MCF 10A (cell line): ENCODE measurements at regions of chr4 and their contacts with region 1.

Region 1: DNA sequence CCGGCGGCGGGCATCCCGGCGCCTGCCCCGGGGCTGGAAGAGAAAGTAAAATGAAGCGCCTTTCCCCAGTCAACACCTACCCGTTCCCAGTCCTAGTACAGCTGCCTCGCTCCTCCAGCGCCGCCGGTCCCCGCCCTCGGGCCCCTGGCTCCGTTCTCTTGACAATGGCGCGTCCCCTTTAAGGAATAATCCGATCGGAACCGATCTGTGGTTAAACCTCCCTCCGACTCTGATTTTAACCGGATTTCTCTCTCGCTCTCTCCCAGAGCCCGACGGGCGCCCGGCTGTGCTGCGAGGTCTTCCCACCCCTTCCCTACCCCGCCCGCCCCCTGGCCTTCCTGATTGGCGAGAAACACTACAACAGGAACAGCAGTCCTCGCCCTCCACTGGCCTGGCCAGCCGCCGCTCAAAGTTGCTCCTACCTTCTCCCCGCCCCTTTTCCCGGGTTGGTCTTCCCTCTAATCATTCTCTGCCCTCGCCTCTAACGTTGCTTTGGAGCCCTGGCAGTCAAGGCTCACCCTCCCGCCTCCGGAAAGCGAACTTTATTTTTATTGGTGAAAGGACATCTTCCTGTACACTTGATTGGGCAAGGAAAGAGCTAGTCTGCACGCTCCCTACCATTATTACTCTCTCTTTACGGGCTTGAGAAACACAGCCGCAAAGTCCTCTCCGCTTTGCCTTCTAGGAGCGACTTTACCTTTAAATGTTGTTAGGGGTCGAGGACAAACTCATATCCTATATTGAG is at the start of gene FRYL:
- DNase-seq: peak; percentile 100
- H3K4me3 Mint-ChIP-seq: peak within 1 kb of the TSS; percentile 94
- H3K27ac Mint-ChIP-seq: peak within 1 kb of the TSS; percentile 96
- H3K4me1 Mint-ChIP-seq: peaks cover 25% of the 10 kb centered on the region
- H3K27me3 Mint-ChIP-seq: no peaks in the 10 kb centered on the region
- CTCF ChIP-seq: no peak
- total RNA-seq, gene FRYL: 52.3 and 53.9 TPM in 2 replicates

Region 2: DNA sequence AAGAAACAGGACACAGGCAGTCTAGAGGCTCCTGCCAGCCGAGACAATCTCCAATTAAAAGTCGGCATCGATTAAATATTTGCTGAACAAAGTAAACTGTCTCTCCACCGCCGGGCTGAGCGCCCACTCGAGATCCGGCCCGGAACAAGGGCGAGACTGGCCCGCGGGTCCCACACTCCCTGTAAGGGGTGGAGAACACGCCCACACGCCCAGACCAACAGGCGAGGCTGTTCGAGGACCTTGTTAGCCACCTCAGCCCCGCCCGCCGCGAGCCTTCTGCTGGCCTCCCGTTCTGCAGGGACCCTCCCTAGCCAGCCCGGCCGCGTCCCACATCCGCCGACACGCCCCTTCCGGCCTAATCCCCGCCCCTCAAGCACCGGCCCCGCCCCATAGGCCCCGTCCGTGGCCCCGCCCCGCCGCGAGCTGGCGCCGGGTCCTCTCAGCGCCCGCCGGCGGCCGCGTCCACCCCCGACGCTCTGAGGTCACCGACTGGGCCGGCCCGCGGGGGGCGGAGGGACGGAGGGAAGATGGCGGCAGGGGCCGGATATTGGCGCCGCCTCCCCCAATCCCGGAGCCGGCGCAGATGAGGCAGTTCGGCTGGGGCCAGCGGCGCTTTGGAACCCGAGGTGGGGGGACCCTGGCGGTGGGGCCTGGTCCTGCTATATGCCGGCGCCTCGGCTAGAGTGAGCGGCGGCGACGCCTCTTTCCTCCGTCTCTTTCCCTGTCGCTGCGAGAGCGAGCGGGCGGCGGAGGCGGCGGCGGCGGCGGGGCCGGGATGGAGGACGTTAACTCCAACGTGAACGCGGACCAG is 439.0 kb before region 1 on chr4 and contains the start of gene SLAIN2:
- CTCF ChIA-PET with region 1: no interaction called
- POLR2A ChIA-PET with region 1: interaction called, 13 read pairs
- intact Hi-C with region 1: no loop called
- DNase-seq: peak; percentile 96
- H3K4me3 Mint-ChIP-seq: peak within 1 kb of the TSS; percentile 98
- H3K27ac Mint-ChIP-seq: peak within 1 kb of the TSS; percentile 97
- H3K4me1 Mint-ChIP-seq: peaks cover 53% of the 10 kb centered on the region
- H3K27me3 Mint-ChIP-seq: no peaks in the 10 kb centered on the region
- CTCF ChIP-seq: no peak
- total RNA-seq, gene SLAIN2: 74.0 and 81.6 TPM in 2 replicates

Region 3: DNA sequence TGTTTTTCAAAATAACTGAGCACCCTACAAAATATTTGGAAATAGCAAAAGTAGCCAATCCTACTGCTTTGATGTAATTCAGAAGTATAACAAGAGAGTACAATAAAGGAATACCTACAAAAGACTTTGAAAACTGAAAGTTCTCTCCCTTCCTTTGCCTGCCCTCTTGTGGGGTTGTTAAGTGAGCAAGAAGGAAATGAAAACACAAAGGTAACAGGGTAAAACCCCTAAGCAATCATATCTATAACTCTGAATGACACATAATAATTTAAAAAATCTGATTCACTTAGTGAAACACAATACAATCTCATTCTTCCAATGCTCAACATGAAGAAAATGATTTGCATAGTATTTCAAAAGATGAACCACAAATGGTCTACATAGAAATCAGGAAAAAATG is 98.3 kb before region 1 on chr4:
- CTCF ChIA-PET with region 1: no interaction called
- POLR2A ChIA-PET with region 1: interaction called, 24 read pairs
- intact Hi-C with region 1: loop called (anchors 5 kb)
- DNase-seq: peak; percentile 45
- H3K4me3 Mint-ChIP-seq: no peak overlapping the region
- H3K27ac Mint-ChIP-seq: no peak overlapping the region
- H3K4me1 Mint-ChIP-seq: peaks cover 12% of the 10 kb centered on the region
- H3K27me3 Mint-ChIP-seq: no peaks in the 10 kb centered on the region
- CTCF ChIP-seq: peak; percentile 29

Region 4: GRCh38 chr4:48767055-48767929 is 12.9 kb before region 1 on chr4:
- CTCF ChIA-PET with region 1: no interaction called
- POLR2A ChIA-PET with region 1: interaction called, 20 read pairs
- intact Hi-C with region 1: no loop called
- DNase-seq: no peak
- H3K4me3 Mint-ChIP-seq: no peak overlapping the region
- H3K27ac Mint-ChIP-seq: no peak overlapping the region
- H3K4me1 Mint-ChIP-seq: peaks cover 32% of the 10 kb centered on the region
- H3K27me3 Mint-ChIP-seq: no peaks in the 10 kb centered on the region
- CTCF ChIP-seq: no peak

Region 5: GRCh38 chr4:48830706-48831531 is 50.7 kb after region 1 on chr4 and contains the start of gene OCIAD1:
- CTCF ChIA-PET with region 1: interaction called, 4 read pairs
- POLR2A ChIA-PET with region 1: interaction called, 81 read pairs
- intact Hi-C with region 1: loop called (anchors 1 kb)
- DNase-seq: peak; percentile 99
- H3K4me3 Mint-ChIP-seq: peak within 1 kb of the TSS; percentile 95
- H3K27ac Mint-ChIP-seq: peak within 1 kb of the TSS; percentile 97
- H3K4me1 Mint-ChIP-seq: peaks cover 5% of the 10 kb centered on the region
- H3K27me3 Mint-ChIP-seq: no peaks in the 10 kb centered on the region
- CTCF ChIP-seq: no peak
- total RNA-seq, gene OCIAD1: 207 and 224 TPM in 2 replicates

Region 6: GRCh38 chr4:48913346-48913745 is 133.2 kb after region 1 on chr4:
- CTCF ChIA-PET with region 1: interaction called, 7 read pairs
- POLR2A ChIA-PET with region 1: interaction called, 15 read pairs
- intact Hi-C with region 1: loop called (anchors 5 kb)
- DNase-seq: peak; percentile 87
- H3K4me3 Mint-ChIP-seq: peak overlapping the region; percentile 38
- H3K27ac Mint-ChIP-seq: peak overlapping the region; percentile 65
- H3K4me1 Mint-ChIP-seq: peaks cover 22% of the 10 kb centered on the region
- H3K27me3 Mint-ChIP-seq: no peaks in the 10 kb centered on the region
- CTCF ChIP-seq: no peak